ENCODE measurements at regions of chr22 and their contacts with region 1.

Region 1: DNA sequence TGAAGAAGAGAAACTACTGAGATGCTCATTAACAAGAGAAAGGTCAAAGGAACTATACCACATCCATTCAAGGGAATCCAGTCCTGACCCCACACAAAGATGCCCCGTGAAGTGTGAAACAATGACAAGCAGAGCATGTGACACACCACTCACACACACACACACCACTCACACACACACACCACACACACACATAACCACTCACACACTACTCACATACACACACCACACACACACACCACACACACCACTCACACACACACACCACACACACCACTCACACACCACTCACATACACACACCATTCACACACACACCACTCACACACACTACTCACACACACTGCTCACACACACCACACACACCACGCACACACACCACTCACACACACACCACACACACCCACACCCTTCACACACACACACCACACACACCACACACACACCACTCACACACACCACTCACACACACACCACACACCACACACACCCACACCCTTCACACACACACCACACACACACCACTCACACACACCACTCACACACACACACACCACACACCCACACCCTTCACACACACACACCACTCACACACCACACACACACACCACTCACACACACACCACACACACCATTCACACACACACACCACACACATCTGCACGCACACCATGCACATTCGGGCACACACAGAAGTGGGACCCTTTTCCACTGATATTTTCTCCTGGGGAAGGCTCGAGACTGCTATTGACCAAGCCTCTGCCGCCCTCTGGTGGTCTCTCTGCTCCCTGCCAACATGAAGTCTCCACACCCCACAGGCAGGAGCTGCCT is 32.0 kb upstream of the COMT start:
- DNase-seq: peak; percentile 32
- ATAC-seq: peak; percentile 99
- H3K4me3 ChIP-seq: no peak overlapping the region
- H3K27ac ChIP-seq: no peak overlapping the region
- H3K4me1 ChIP-seq: no peaks in the 10 kb centered on the region; the same call in 1 of the 2 replicates
- H3K27me3 ChIP-seq: no peaks in the 10 kb centered on the region
- CTCF ChIP-seq: peak; percentile 85 to 93 (median 92)
- EP300 ChIP-seq: no peak
- POLR2A ChIP-seq: no peak
- RAD21 ChIP-seq: peak; percentile 92

Region 2: GRCh38 chr22:19756288-19757128 is 153.1 kb before region 1 on chr22:
- CTCF ChIA-PET with region 1: interaction called, 7 read pairs
- POLR2A ChIA-PET with region 1: no interaction called
- RAD21 ChIA-PET with region 1: interaction called, 12 read pairs
- SMC1A ChIA-PET with region 1: no interaction called
- in situ Hi-C with region 1: no loop called
- intact Hi-C with region 1: no loop called
- DNase-seq: no peak
- ATAC-seq: peak; percentile 87
- H3K4me3 ChIP-seq: no peak overlapping the region; the same call in 1 of the 2 replicates
- H3K27ac ChIP-seq: no peak overlapping the region
- H3K4me1 ChIP-seq: peaks cover 6% of the 10 kb centered on the region
- H3K27me3 ChIP-seq: peaks cover 25 to 26% of the 10 kb centered on the region in 2 experiments
- CTCF ChIP-seq: peak; percentile 40 to 66 (median 62)
- EP300 ChIP-seq: no peak
- POLR2A ChIP-seq: no peak
- RAD21 ChIP-seq: peak; percentile 45; the same call in 1 of the 2 replicates

Region 3: GRCh38 chr22:19772422-19773324 is 136.9 kb before region 1 on chr22:
- CTCF ChIA-PET with region 1: interaction called, 5 read pairs
- POLR2A ChIA-PET with region 1: no interaction called
- RAD21 ChIA-PET with region 1: interaction called, 12 read pairs
- SMC1A ChIA-PET with region 1: interaction called, 4 read pairs
- in situ Hi-C with region 1: no loop called
- intact Hi-C with region 1: no loop called
- DNase-seq: peak; percentile 61
- ATAC-seq: peak; percentile 90
- H3K4me3 ChIP-seq: no peak overlapping the region
- H3K27ac ChIP-seq: no peak overlapping the region
- H3K4me1 ChIP-seq: peaks cover 9% of the 10 kb centered on the region
- H3K27me3 ChIP-seq: peaks cover 0 to 5% of the 10 kb centered on the region in 2 experiments; a peak in 3 of 4 replicates
- CTCF ChIP-seq: peak; percentile 15 to 42 (median 26); a peak in 3 of 6 replicates
- EP300 ChIP-seq: peak in 1 of 2 experiments; percentile 37; a peak in 1 of 4 replicates
- POLR2A ChIP-seq: no peak
- RAD21 ChIP-seq: no peak

Region 4: GRCh38 chr22:19862619-19863246 is 46.8 kb before region 1 on chr22:
- CTCF ChIA-PET with region 1: no interaction called
- POLR2A ChIA-PET with region 1: no interaction called
- RAD21 ChIA-PET with region 1: no interaction called
- SMC1A ChIA-PET with region 1: no interaction called
- in situ Hi-C with region 1: no loop called
- intact Hi-C with region 1: no loop called
- DNase-seq: no peak
- ATAC-seq: no peak
- H3K4me3 ChIP-seq: no peak overlapping the region
- H3K27ac ChIP-seq: no peak overlapping the region
- H3K4me1 ChIP-seq: no peaks in the 10 kb centered on the region
- H3K27me3 ChIP-seq: no peaks in the 10 kb centered on the region
- CTCF ChIP-seq: no peak
- EP300 ChIP-seq: no peak
- POLR2A ChIP-seq: no peak
- RAD21 ChIP-seq: no peak

Region 5: GRCh38 chr22:19948057-19948760 is 38.6 kb after region 1 on chr22:
- CTCF ChIA-PET with region 1: interaction called, 12 read pairs
- POLR2A ChIA-PET with region 1: no interaction called
- RAD21 ChIA-PET with region 1: interaction called, 5 read pairs
- SMC1A ChIA-PET with region 1: interaction called, 4 read pairs
- in situ Hi-C with region 1: no loop called
- intact Hi-C with region 1: no loop called
- DNase-seq: no peak
- ATAC-seq: no peak
- H3K4me3 ChIP-seq: no peak overlapping the region
- H3K27ac ChIP-seq: no peak overlapping the region
- H3K4me1 ChIP-seq: peaks cover 6% of the 10 kb centered on the region; the same call in 1 of the 2 replicates
- H3K27me3 ChIP-seq: no peaks in the 10 kb centered on the region
- CTCF ChIP-seq: no peak
- EP300 ChIP-seq: no peak
- POLR2A ChIP-seq: no peak
- RAD21 ChIP-seq: no peak

Region 6: GRCh38 chr22:19970479-19971275 is 61.1 kb after region 1 on chr22:
- CTCF ChIA-PET with region 1: no interaction called
- POLR2A ChIA-PET with region 1: no interaction called
- RAD21 ChIA-PET with region 1: no interaction called
- SMC1A ChIA-PET with region 1: no interaction called
- in situ Hi-C with region 1: no loop called
- intact Hi-C with region 1: no loop called
- DNase-seq: no peak
- ATAC-seq: peak; percentile 88
- H3K4me3 ChIP-seq: no peak overlapping the region
- H3K27ac ChIP-seq: no peak overlapping the region
- H3K4me1 ChIP-seq: no peaks in the 10 kb centered on the region
- H3K27me3 ChIP-seq: no peaks in the 10 kb centered on the region
- CTCF ChIP-seq: peak; percentile 88 to 99 (median 89)
- EP300 ChIP-seq: no peak
- POLR2A ChIP-seq: peak; percentile 45
- RAD21 ChIP-seq: peak; percentile 82

Region 7: GRCh38 chr22:20013382-20013871 is 103.9 kb after region 1 on chr22:
- CTCF ChIA-PET with region 1: no interaction called
- POLR2A ChIA-PET with region 1: no interaction called
- RAD21 ChIA-PET with region 1: no interaction called
- SMC1A ChIA-PET with region 1: no interaction called
- in situ Hi-C with region 1: no loop called
- intact Hi-C with region 1: no loop called
- DNase-seq: no peak
- ATAC-seq: peak; percentile 51
- H3K4me3 ChIP-seq: no peak overlapping the region
- H3K27ac ChIP-seq: no peak overlapping the region
- H3K4me1 ChIP-seq: no peaks in the 10 kb centered on the region
- H3K27me3 ChIP-seq: peaks cover 8 to 12% of the 10 kb centered on the region in 2 experiments; a peak in 3 of 4 replicates
- CTCF ChIP-seq: peak; percentile 52 to 66 (median 57)
- EP300 ChIP-seq: no peak
- POLR2A ChIP-seq: no peak
- RAD21 ChIP-seq: peak; percentile 49